OCI-LY7 (cell line): ENCODE measurements at regions of chr21 and their contacts with region 1.

Region 1: DNA sequence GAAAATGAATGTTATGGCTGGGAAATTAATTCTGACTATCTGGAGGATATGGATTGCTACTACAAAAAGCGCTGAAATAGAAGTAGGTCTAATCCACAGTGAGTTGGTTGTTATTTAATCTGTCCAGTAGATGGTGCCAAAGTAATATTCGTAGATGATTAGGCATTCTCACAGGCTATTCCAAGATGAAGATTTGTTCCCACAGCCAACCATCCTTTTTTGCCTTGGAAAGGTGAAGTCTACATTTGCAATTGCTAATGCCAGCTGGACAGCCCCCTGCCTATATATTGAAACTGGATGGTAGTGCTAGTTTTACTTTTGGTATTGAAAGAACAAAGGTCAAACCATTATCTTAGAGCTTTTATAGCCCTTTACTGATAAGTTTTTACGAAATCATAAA is 43.8 kb downstream of the RBM11 start:
- DNase-seq: peak; percentile 46
- H3K4me3 ChIP-seq: no peak overlapping the region
- H3K27ac ChIP-seq: no peak overlapping the region
- H3K4me1 ChIP-seq: no peaks in the 10 kb centered on the region
- CTCF ChIP-seq: peak; percentile 82

Region 2: DNA sequence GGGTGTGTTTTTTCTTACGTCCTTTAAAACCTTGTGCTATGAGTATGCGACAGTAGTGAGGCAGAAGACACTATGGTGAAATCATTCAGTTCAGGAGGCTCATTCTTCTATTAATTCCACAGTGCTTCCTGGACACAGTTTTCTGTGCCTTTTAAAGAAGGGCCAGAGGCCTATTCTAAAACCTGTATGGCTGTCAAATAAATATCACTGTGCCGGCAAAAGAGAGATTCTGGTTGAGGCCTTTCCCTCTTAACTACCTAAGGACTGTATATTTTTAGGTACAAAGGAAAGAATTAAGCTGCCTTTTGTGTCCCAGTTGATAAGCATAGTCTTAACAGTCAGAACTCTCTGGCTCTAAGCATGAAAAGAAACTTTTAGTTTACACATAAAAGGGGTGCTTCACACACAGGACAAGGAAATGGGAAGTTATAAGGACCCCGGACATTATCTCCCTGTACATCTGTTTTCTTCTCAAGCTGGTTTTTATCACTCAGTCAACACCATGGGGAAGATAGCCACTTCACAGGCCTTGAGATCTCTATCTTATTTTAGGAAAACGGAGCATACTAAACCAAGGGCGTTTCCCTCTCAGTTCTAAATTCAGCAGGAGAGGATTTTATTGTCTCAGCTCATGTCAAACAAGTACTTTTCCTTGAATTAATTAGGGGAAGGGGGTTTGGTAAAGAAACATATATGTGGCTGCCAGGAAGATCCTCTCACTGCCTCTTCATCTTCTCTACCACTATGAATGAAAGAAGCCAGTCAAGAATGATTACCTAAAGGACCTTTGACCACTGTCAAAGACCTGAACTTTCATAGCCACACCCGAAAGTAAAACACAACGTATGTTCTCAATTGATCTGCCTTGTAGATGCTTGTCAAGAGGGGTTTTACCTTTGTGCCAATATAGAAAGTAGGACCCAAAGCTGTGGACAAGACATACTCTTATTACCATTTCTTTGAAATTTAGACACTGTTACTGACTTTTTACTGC is 194.6 kb after region 1 on chr21:
- CTCF ChIA-PET with region 1: no interaction called
- POLR2A ChIA-PET with region 1: no interaction called
- intact Hi-C with region 1: no loop called
- DNase-seq: no peak
- H3K4me3 ChIP-seq: no peak overlapping the region
- H3K27ac ChIP-seq: no peak overlapping the region
- H3K4me1 ChIP-seq: no peaks in the 10 kb centered on the region
- CTCF ChIP-seq: no peak

Region 3: GRCh38 chr21:14773777-14774345 is 514.1 kb after region 1 on chr21:
- CTCF ChIA-PET with region 1: no interaction called
- POLR2A ChIA-PET with region 1: no interaction called
- intact Hi-C with region 1: loop called (anchors 10 kb)
- DNase-seq: peak; percentile 63
- H3K4me3 ChIP-seq: no peak overlapping the region
- H3K27ac ChIP-seq: no peak overlapping the region
- H3K4me1 ChIP-seq: peaks cover 3% of the 10 kb centered on the region
- CTCF ChIP-seq: peak; percentile 96

Region 4: DNA sequence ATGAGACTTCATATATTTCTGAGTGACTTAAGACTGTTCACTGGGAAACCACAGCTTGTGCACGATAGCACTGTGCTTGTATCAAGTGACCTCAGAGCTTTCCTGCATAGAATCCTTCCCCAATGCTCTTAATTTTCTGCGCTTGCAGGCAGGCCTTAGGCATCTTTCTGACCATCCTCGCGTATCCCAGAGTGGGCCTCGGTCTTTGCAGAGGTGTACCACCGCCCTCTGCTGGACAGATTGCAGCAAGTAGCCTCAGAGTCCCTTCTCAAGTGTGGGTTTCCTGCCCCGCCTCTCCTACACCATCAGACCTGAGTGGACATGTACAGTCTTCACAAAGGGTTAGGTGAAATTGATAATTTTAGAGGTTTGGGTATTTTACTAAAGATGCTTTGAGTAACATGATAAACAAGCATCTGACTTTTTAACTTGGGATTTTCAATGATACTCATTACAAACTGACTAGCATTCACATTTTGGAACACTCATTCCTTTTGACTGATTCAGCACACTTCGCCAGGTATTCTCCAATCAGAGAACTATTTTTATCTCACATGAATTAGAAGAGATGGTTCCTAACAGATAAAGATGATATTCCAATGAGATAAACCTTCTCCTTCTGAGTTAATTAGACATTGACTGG is 1223.5 kb after region 1 on chr21:
- CTCF ChIA-PET with region 1: no interaction called
- POLR2A ChIA-PET with region 1: no interaction called
- intact Hi-C with region 1: loop called (anchors 2 kb)
- DNase-seq: peak; percentile 79
- H3K4me3 ChIP-seq: no peak overlapping the region
- H3K27ac ChIP-seq: no peak overlapping the region
- H3K4me1 ChIP-seq: no peaks in the 10 kb centered on the region
- CTCF ChIP-seq: peak; percentile 91

Region 5: GRCh38 chr21:15592271-15592860 is 1332.6 kb after region 1 on chr21:
- CTCF ChIA-PET with region 1: no interaction called
- POLR2A ChIA-PET with region 1: no interaction called
- intact Hi-C with region 1: loop called (anchors 5 kb)
- DNase-seq: peak; percentile 51
- H3K4me3 ChIP-seq: no peak overlapping the region
- H3K27ac ChIP-seq: no peak overlapping the region
- H3K4me1 ChIP-seq: no peaks in the 10 kb centered on the region
- CTCF ChIP-seq: peak; percentile 89